Left ventricle myocardium inferior (tissue), 1 donor: ENCODE measurements at regions of chr1 and their contacts with region 1.

Region 1: GRCh38 chr1:75265792-75266191 is 131.6 kb downstream of the LHX8 start:
- DNase-seq: no peak
- H3K4me3 ChIP-seq: no peak overlapping the region
- H3K27ac ChIP-seq: no peak overlapping the region
- H3K4me1 ChIP-seq: no peaks in the 10 kb centered on the region
- H3K27me3 ChIP-seq: no peaks in the 10 kb centered on the region
- CTCF ChIP-seq: peak; percentile 66

Region 2: DNA sequence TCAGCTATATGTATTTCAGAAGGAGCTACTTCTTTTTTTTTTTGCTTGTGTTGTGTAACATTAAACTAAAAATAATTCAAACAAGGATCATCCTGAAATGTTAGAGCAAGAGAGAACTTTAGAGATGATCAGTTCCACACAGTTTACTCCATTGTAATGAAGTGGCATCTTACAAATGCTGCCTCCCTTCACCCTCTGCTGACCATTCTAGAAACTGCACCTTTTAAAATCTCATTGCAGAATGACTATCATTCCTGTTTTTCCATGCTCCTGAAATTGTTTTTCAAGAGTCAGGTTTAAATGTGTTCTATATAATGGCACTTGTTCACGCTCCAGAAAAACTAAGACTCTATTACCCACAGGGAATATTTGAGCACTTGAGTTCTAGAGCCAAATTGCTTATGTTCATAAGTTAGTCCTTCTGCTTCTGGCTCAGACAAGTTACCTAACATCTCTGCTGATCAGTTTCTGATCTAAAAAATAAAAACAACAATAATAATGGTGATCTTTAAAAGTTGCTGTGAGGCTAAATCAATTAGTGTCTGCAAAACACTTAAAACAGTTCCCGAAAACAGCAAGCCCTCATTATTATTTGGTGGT is 366.7 kb after region 1 on chr1:
- intact Hi-C with region 1: loop called (anchors 10 kb)
- DNase-seq: no peak
- H3K4me3 ChIP-seq: no peak overlapping the region
- H3K27ac ChIP-seq: no peak overlapping the region
- H3K4me1 ChIP-seq: no peaks in the 10 kb centered on the region
- H3K27me3 ChIP-seq: peaks cover 9% of the 10 kb centered on the region
- CTCF ChIP-seq: peak; percentile 73